ENCODE measurements at regions of chr22 and their contacts with region 1.

Region 1: GRCh38 chr22:39319270-39320022 is at the start of gene RPL3:
- DNase-seq: peak; percentile 97
- ATAC-seq: peak; percentile 83
- H3K4me3 ChIP-seq: peak within 1 kb of the TSS; percentile 85
- H3K27ac ChIP-seq: peak within 1 kb of the TSS; percentile 89
- H3K4me1 ChIP-seq: peaks cover 20% of the 10 kb centered on the region
- H3K27me3 ChIP-seq: no peaks in the 10 kb centered on the region
- CTCF ChIP-seq: peak in 2 of 3 experiments; percentile 7 to 8; a peak in 2 of 6 replicates
- EP300 ChIP-seq: 0 out of 4 replicates have a peak, but pooled peaks of 1 of the 2 experiments have one; percentile 2
- POLR2A ChIP-seq: peak; percentile 99
- RAD21 ChIP-seq: no peak
- polyA plus RNA-seq, gene RPL3: 4,597 to 6,791 TPM

Region 2: GRCh38 chr22:38766076-38766777 is 553.2 kb before region 1 on chr22:
- CTCF ChIA-PET with region 1: interaction called, 8 read pairs
- POLR2A ChIA-PET with region 1: no interaction called
- RAD21 ChIA-PET with region 1: interaction called, 4 read pairs
- SMC1A ChIA-PET with region 1: no interaction called
- in situ Hi-C with region 1: no loop called
- intact Hi-C with region 1: loop called (anchors 10 kb)
- DNase-seq: no peak
- ATAC-seq: peak; percentile 75
- H3K4me3 ChIP-seq: no peak overlapping the region
- H3K27ac ChIP-seq: no peak overlapping the region
- H3K4me1 ChIP-seq: peaks cover 2% of the 10 kb centered on the region; the same call in 1 of the 2 replicates
- H3K27me3 ChIP-seq: no peaks in the 10 kb centered on the region; a peak in 1 of 4 replicates
- CTCF ChIP-seq: peak; percentile 70 to 86 (median 71)
- EP300 ChIP-seq: no peak
- POLR2A ChIP-seq: no peak
- RAD21 ChIP-seq: no peak

Region 3: GRCh38 chr22:39090426-39091064 is 228.9 kb before region 1 on chr22:
- CTCF ChIA-PET with region 1: no interaction called
- POLR2A ChIA-PET with region 1: no interaction called
- RAD21 ChIA-PET with region 1: no interaction called
- SMC1A ChIA-PET with region 1: no interaction called
- in situ Hi-C with region 1: no loop called
- intact Hi-C with region 1: no loop called
- DNase-seq: no peak
- ATAC-seq: peak; percentile 66
- H3K4me3 ChIP-seq: no peak overlapping the region
- H3K27ac ChIP-seq: peak overlapping the region; percentile 39; the same call in 1 of the 2 replicates
- H3K4me1 ChIP-seq: peaks cover 34% of the 10 kb centered on the region
- H3K27me3 ChIP-seq: no peaks in the 10 kb centered on the region
- CTCF ChIP-seq: no peak
- EP300 ChIP-seq: no peak
- POLR2A ChIP-seq: no peak
- RAD21 ChIP-seq: no peak

Region 4: GRCh38 chr22:39152511-39153219 is 166.8 kb before region 1 on chr22 and contains the start of gene CBX7:
- CTCF ChIA-PET with region 1: interaction called, 9 read pairs
- POLR2A ChIA-PET with region 1: interaction called, 23 read pairs
- RAD21 ChIA-PET with region 1: interaction called, 14 read pairs
- SMC1A ChIA-PET with region 1: interaction called, 7 read pairs
- in situ Hi-C with region 1: no loop called
- intact Hi-C with region 1: loop called (anchors 5 kb)
- DNase-seq: peak; percentile 46
- ATAC-seq: peak; percentile 79
- H3K4me3 ChIP-seq: peak within 1 kb of the TSS; percentile 80
- H3K27ac ChIP-seq: peak within 1 kb of the TSS; percentile 73
- H3K4me1 ChIP-seq: peaks cover 41% of the 10 kb centered on the region
- H3K27me3 ChIP-seq: peaks cover 3 to 12% of the 10 kb centered on the region in 2 experiments
- CTCF ChIP-seq: no peak
- EP300 ChIP-seq: no peak
- POLR2A ChIP-seq: peak; percentile 73
- RAD21 ChIP-seq: no peak
- polyA plus RNA-seq, gene CBX7: 0.18 to 0.64 TPM

Region 5: DNA sequence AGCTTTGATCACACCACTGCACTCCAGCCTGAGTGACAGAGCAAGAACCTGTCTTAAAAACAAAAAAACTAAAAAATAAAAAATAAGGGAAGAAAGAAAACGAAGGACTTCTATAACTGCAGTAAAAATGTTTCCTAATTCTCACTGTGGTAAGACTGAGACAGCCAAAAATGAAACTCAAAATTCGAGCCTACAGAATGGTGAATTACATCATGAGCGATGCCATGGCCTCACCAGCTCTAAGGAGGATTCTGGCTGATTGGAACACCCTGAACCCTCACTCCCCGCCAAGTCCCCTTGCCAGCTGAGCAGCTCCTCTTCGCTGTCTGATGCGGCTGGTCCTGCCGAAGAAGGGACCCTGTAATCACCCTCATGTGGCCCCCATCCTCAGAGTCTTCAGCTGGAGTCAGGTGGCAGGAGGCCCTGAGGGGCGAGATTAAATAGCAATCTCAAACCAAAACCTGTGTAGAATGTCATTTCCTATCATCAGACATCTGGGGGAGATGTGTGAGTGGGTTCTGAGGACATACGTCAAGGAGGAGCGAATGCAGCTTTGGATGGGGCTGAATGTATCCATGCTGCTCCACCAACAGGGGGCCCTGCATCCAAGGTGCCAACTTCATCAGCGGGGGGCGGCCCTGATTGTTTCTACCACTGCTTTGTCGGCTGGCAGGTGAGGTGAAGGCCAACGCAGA is 103.9 kb before region 1 on chr22:
- CTCF ChIA-PET with region 1: interaction called, 13 read pairs
- POLR2A ChIA-PET with region 1: no interaction called
- RAD21 ChIA-PET with region 1: interaction called, 3 read pairs
- SMC1A ChIA-PET with region 1: no interaction called
- in situ Hi-C with region 1: no loop called
- intact Hi-C with region 1: no loop called
- DNase-seq: no peak
- ATAC-seq: peak; percentile 80
- H3K4me3 ChIP-seq: no peak overlapping the region
- H3K27ac ChIP-seq: no peak overlapping the region
- H3K4me1 ChIP-seq: no peaks in the 10 kb centered on the region
- H3K27me3 ChIP-seq: no peaks in the 10 kb centered on the region; a peak in 1 of 4 replicates
- CTCF ChIP-seq: peak; percentile 37 to 56 (median 47); a peak in 5 of 6 replicates
- EP300 ChIP-seq: no peak
- POLR2A ChIP-seq: no peak
- RAD21 ChIP-seq: peak; percentile 49

Region 6: DNA sequence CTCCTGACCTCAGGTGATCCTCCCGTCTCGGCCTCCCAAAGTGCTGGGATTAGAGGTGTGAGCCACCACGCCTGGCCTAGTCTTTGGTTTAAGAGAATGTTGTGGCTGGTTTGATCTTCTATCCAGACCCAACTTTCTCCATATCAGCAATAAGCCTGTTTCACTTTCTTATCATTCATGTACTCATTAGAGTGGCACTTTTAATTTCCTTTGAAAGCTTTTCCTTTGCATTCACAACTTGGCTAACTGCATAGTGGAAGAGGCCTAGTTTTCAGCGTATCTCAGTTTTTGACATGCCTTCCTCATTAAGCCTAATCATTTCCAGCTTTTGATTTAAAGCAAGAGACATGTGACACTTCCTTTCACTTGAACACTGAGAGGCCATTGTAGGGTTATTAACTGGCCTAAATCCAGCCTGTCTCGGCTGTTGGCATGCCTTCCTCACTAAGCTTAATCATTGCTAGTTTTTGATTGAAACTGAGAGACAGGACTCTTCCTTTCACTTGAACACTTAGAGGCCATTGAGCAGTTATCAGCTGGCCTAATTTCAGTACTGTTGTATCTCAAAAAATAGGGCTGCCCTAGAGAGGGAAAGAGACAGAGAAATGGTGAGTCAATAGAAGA is 13.1 kb after region 1 on chr22:
- CTCF ChIA-PET with region 1: interaction called, 62 read pairs
- POLR2A ChIA-PET with region 1: interaction called, 32 read pairs
- RAD21 ChIA-PET with region 1: interaction called, 10 read pairs
- SMC1A ChIA-PET with region 1: interaction called, 36 read pairs
- in situ Hi-C with region 1: no loop called
- intact Hi-C with region 1: no loop called
- DNase-seq: peak; percentile 36
- ATAC-seq: peak; percentile 93
- H3K4me3 ChIP-seq: no peak overlapping the region
- H3K27ac ChIP-seq: no peak overlapping the region
- H3K4me1 ChIP-seq: no peaks in the 10 kb centered on the region
- H3K27me3 ChIP-seq: no peaks in the 10 kb centered on the region
- CTCF ChIP-seq: no peak
- EP300 ChIP-seq: no peak
- POLR2A ChIP-seq: no peak
- RAD21 ChIP-seq: no peak

Region 7: GRCh38 chr22:39349506-39349966 is 30.1 kb after region 1 on chr22:
- CTCF ChIA-PET with region 1: interaction called, 5 read pairs
- POLR2A ChIA-PET with region 1: interaction called, 10 read pairs
- RAD21 ChIA-PET with region 1: interaction called, 7 read pairs
- SMC1A ChIA-PET with region 1: interaction called, 3 read pairs
- in situ Hi-C with region 1: no loop called
- intact Hi-C with region 1: no loop called
- DNase-seq: no peak
- ATAC-seq: peak; percentile 31
- H3K4me3 ChIP-seq: peak overlapping the region; percentile 49; the same call in 1 of the 2 replicates
- H3K27ac ChIP-seq: no peak overlapping the region
- H3K4me1 ChIP-seq: peaks cover 7% of the 10 kb centered on the region
- H3K27me3 ChIP-seq: peaks cover 0 to 1% of the 10 kb centered on the region in 2 experiments; a peak in 1 of 4 replicates
- CTCF ChIP-seq: no peak; a peak in 1 of 6 replicates
- EP300 ChIP-seq: 0 out of 4 replicates have a peak, but pooled peaks of 1 of the 2 experiments have one; percentile 8
- POLR2A ChIP-seq: 0 out of 2 replicates have a peak, but pooled peaks have one; percentile 20
- RAD21 ChIP-seq: no peak

Region 8: GRCh38 chr22:39520054-39520891 is 200.8 kb after region 1 on chr22 and contains the start of gene ATF4:
- CTCF ChIA-PET with region 1: interaction called, 5 read pairs
- POLR2A ChIA-PET with region 1: interaction called, 4 read pairs
- RAD21 ChIA-PET with region 1: interaction called, 19 read pairs
- SMC1A ChIA-PET with region 1: interaction called, 10 read pairs
- in situ Hi-C with region 1: no loop called
- intact Hi-C with region 1: no loop called
- DNase-seq: peak; percentile 93
- ATAC-seq: peak; percentile 91
- H3K4me3 ChIP-seq: peak within 1 kb of the TSS; percentile 97
- H3K27ac ChIP-seq: peak within 1 kb of the TSS; percentile 96
- H3K4me1 ChIP-seq: peaks cover 23% of the 10 kb centered on the region
- H3K27me3 ChIP-seq: no peaks in the 10 kb centered on the region
- CTCF ChIP-seq: no peak
- EP300 ChIP-seq: no peak
- POLR2A ChIP-seq: peak; percentile 93
- RAD21 ChIP-seq: no peak
- polyA plus RNA-seq, gene ATF4: 88.3 to 187 TPM

Region 9: GRCh38 chr22:39622881-39623367 is 303.5 kb after region 1 on chr22:
- CTCF ChIA-PET with region 1: no interaction called
- POLR2A ChIA-PET with region 1: no interaction called
- RAD21 ChIA-PET with region 1: no interaction called
- SMC1A ChIA-PET with region 1: no interaction called
- in situ Hi-C with region 1: no loop called
- intact Hi-C with region 1: no loop called
- DNase-seq: no peak
- ATAC-seq: peak; percentile 86
- H3K4me3 ChIP-seq: no peak overlapping the region
- H3K27ac ChIP-seq: no peak overlapping the region
- H3K4me1 ChIP-seq: no peaks in the 10 kb centered on the region; the same call in 1 of the 2 replicates
- H3K27me3 ChIP-seq: peaks cover 0 to 1% of the 10 kb centered on the region in 2 experiments; a peak in 2 of 4 replicates
- CTCF ChIP-seq: peak; percentile 66 to 75 (median 75)
- EP300 ChIP-seq: no peak
- POLR2A ChIP-seq: no peak
- RAD21 ChIP-seq: peak; percentile 84